ENCODE measurements at regions of chr6 and their contacts with region 1.

Region 1: DNA sequence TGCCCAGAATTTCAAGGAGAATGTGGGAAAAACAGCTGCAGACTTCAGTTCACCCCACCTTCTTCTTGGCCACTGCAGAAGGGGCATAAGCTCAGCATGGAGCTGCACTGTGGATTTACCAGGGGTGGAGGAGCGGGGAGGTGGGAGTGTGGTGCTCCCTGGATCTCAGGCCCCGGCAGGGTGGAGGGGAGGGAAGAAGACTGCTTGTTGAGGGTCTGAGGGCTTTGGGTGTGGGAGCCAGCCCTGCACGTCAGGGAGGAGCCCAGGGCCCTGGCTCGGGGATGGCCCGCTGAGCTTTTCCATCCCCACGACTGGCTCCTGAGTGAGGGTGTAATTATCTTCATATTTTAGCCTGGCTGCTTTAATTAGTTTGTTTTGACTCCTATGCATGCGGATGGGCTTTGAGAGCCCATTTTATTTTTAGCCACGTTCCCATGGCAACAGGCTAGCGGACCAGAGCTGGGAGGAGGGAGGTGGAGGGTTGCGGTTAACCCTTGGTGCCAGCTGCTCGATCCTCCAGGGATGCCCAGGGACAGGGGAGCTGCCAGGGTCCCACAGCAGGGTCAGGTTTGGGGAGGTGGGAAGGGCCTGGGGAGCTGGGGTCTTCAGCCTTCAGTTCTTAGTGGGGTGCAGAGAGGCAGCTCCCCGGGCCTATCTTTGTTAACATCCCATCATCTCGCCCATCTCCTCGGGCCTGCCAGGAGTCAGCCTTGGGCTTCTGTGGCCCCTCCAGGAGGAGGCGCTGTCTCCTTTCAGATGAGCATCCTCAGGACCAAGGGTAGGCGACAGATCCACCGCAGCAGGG is 68.2 kb downstream of the RAB44 start:
- DNase-seq: peak; percentile 88
- H3K4me3 ChIP-seq: no peak overlapping the region
- H3K27ac ChIP-seq: no peak overlapping the region
- H3K4me1 ChIP-seq: peaks cover 0 to 28% (median 2%) of the 10 kb centered on the region in 4 donors
- H3K27me3 ChIP-seq: no peaks in the 10 kb centered on the region
- CTCF ChIP-seq: peak; percentile 81 to 93 (median 89)
- EP300 ChIP-seq: no peak
- POLR2A ChIP-seq: no peak

Region 2: DNA sequence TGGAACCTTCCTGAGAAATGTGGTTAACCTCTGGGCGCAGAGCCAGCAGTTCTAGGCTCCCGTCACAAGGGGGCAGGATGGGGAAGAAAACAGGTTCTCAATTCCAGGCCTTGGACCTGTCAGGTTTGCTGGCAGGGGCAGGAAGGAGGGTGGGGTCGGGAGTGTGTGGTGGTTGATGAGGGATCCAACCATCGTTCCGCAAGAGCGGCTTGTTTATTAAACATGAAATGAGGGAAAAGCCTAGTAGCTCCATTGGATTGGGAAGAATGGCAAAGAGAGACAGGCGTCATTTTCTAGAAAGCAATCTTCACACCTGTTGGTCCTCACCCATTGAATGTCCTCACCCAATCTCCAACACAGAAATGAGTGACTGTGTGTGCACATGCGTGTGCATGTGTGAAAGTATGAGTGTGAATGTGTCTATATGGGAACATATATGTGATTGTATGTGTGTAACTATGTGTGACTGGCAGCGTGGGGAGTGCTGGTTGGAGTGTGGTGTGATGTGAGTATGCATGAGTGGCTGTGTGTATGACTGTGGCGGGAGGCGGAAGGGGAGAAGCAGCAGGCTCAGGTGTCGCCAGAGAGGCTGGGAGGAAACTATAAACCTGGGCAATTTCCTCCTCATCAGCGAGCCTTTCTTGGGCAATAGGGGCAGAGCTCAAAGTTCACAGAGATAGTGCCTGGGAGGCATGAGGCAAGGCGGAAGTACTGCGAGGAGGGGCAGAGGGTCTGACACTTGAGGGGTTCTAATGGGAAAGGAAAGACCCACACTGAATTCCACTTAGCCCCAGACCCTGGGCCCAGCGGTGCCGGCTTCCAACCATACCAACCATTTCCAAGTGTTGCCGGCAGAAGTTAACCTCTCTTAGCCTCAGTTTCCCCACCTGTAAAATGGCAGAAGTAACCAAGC is 142.0 kb before region 1 on chr6:
- in situ Hi-C with region 1: loop called in 1 of 4 experiments (anchors 25 kb)
- intact Hi-C with region 1: no loop called
- DNase-seq: peak; percentile 94
- H3K4me3 ChIP-seq: no peak overlapping the region
- H3K27ac ChIP-seq: peak overlapping the region; percentile 69 to 72 (median 70)
- H3K4me1 ChIP-seq: peaks cover 12 to 59% (median 36%) of the 10 kb centered on the region in 4 donors
- H3K27me3 ChIP-seq: no peaks in the 10 kb centered on the region
- CTCF ChIP-seq: peak; percentile 86 to 96 (median 91)
- EP300 ChIP-seq: no peak
- POLR2A ChIP-seq: peak; percentile 86

Region 3: DNA sequence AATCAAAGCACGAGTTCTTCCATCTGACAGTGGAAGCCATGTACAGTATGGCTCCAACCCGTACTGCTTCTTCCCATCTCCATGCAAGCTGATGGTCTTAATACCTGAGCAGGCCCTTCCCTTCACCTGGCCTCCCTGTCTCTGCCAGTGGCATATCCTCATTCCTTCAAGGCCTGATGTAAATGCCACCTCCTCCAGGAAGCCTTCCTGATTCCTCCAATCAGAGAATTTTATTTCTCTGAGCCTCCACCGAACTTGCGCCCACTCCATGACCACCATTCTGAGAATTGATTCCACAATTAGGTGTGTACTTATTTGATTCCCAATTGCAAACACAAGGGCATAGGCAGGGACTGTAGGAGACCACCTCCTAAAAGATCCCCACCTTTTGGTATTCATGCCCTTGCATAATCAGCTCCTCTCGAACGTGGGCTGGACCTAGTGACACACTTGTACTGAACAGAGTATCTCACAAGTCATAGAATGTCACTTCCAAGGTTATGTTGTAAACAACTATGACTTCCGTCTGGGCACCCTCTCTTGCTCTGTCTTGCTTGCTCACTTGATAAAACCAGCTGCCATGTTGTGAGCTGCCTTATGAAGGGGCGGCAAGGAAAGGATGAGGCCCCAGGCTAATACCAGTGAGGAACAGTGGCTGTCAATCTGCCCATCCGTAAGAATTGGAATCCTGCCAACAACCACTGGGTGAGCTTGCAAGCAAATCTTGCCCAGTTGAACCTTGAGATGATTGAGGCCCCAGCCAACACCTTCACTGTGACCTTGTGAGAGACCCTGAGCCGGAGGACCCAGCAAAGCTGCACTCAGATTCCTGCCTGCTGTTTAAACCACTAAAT is 34.7 kb after region 1 on chr6:
- in situ Hi-C with region 1: no loop called
- intact Hi-C with region 1: no loop called
- DNase-seq: no peak
- H3K4me3 ChIP-seq: no peak overlapping the region
- H3K27ac ChIP-seq: no peak overlapping the region
- H3K4me1 ChIP-seq: no peaks in the 10 kb centered on the region
- H3K27me3 ChIP-seq: peaks cover 3% of the 10 kb centered on the region
- CTCF ChIP-seq: no peak
- EP300 ChIP-seq: no peak
- POLR2A ChIP-seq: no peak

Region 4: GRCh38 chr6:36839749-36840431 is 74.1 kb after region 1 on chr6:
- in situ Hi-C with region 1: loop called in 1 of 4 experiments (anchors 5 kb)
- intact Hi-C with region 1: loop called (anchors 5 kb)
- DNase-seq: no peak
- H3K4me3 ChIP-seq: peak overlapping the region; percentile 29 to 52 (median 38)
- H3K27ac ChIP-seq: peak overlapping the region in 1 of 4 donors; percentile 53
- H3K4me1 ChIP-seq: peaks cover 7 to 24% (median 19%) of the 10 kb centered on the region in 4 donors
- H3K27me3 ChIP-seq: peaks cover 32% of the 10 kb centered on the region
- CTCF ChIP-seq: peak in 1 of 5 experiments; percentile 19
- EP300 ChIP-seq: no peak
- POLR2A ChIP-seq: no peak

Region 5: GRCh38 chr6:36851149-36851614 is 85.4 kb after region 1 on chr6:
- in situ Hi-C with region 1: loop called in 2 of 4 experiments (anchors 5 kb)
- intact Hi-C with region 1: loop called (anchors 5 kb)
- DNase-seq: peak; percentile 46
- H3K4me3 ChIP-seq: no peak overlapping the region
- H3K27ac ChIP-seq: peak overlapping the region; percentile 10 to 63 (median 13)
- H3K4me1 ChIP-seq: peaks cover 0 to 22% (median 14%) of the 10 kb centered on the region in 4 donors
- H3K27me3 ChIP-seq: no peaks in the 10 kb centered on the region
- CTCF ChIP-seq: peak; percentile 64 to 81 (median 71)
- EP300 ChIP-seq: no peak
- POLR2A ChIP-seq: no peak

Region 6: DNA sequence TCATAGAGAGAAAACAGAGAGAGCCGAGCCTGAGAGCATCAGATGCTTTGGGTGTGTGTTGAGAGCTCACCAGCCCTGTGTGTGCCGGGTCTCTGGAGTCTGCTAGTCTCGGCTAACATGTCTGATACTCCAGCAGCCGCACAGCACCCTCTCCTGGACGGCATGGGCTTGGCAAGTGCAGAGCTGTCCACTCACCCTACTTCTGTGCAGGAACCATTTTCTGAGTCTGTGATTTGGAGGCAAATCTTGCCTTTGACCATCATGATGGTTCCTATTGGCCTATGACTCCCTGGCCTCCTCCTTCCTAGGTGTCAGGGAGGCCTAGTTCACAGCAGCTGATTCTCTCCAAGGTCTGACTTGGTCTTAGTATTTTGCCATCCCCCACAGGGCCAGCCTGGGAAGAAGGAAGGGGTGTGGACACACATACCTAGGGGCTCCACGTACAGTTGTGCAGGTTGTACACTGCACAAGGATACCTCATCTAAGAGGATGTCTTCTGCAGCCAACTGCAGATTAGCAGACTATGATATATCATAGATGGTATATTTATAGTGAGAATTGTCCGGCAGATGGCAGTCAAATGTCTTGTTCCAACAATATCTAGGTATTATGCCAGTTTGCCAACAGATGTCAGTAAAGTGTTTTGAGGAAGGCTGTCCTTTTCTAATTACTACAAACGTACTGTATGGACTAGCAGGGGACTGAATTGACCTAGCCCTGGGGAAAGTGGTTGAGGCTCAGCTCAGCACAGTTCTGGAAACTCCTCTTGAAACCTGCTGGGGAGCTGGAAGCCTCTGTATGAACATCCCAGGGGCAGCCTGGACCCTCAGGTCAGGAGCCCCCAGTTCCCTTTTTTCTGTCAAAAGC is 252.6 kb after region 1 on chr6:
- in situ Hi-C with region 1: loop called in 2 of 4 experiments (anchors 10 to 25 kb)
- intact Hi-C with region 1: no loop called
- DNase-seq: peak; percentile 92
- H3K4me3 ChIP-seq: no peak overlapping the region
- H3K27ac ChIP-seq: peak overlapping the region; percentile 30 to 45 (median 42)
- H3K4me1 ChIP-seq: peaks cover 0 to 19% (median 8%) of the 10 kb centered on the region in 4 donors
- H3K27me3 ChIP-seq: no peaks in the 10 kb centered on the region
- CTCF ChIP-seq: peak; percentile 83 to 93 (median 89)
- EP300 ChIP-seq: no peak
- POLR2A ChIP-seq: no peak

Region 7: GRCh38 chr6:37207903-37208456 is 442.2 kb after region 1 on chr6:
- in situ Hi-C with region 1: loop called in 2 of 4 experiments (anchors 10 to 25 kb)
- intact Hi-C with region 1: no loop called
- DNase-seq: peak; percentile 92
- H3K4me3 ChIP-seq: no peak overlapping the region
- H3K27ac ChIP-seq: no peak overlapping the region
- H3K4me1 ChIP-seq: peaks cover 11 to 32% (median 11%) of the 10 kb centered on the region in 4 donors
- H3K27me3 ChIP-seq: no peaks in the 10 kb centered on the region
- CTCF ChIP-seq: peak; percentile 71 to 90 (median 84)
- EP300 ChIP-seq: no peak
- POLR2A ChIP-seq: no peak

Region 8: GRCh38 chr6:37222125-37222967 is 456.6 kb after region 1 on chr6:
- in situ Hi-C with region 1: loop called in 1 of 4 experiments (anchors 25 kb)
- intact Hi-C with region 1: no loop called
- DNase-seq: peak; percentile 81
- H3K4me3 ChIP-seq: peak overlapping the region; percentile 40 to 78 (median 50)
- H3K27ac ChIP-seq: peak overlapping the region; percentile 58 to 72 (median 61)
- H3K4me1 ChIP-seq: peaks cover 0 to 15% (median 10%) of the 10 kb centered on the region in 4 donors
- H3K27me3 ChIP-seq: no peaks in the 10 kb centered on the region
- CTCF ChIP-seq: no peak
- EP300 ChIP-seq: no peak
- POLR2A ChIP-seq: no peak

Measured in transverse colon (tissue), 4 donors.